ENCODE measurements at regions of chr17 and their contacts with region 1.

Region 1: GRCh38 chr17:42067351-42068091 is 17.1 kb upstream of the C17orf113 start:
- DNase-seq: peak; percentile 73
- CTCF ChIP-seq: peak; percentile 93

Region 2: GRCh38 chr17:42027961-42028790 is 39.3 kb before region 1 on chr17:
- CTCF ChIA-PET with region 1: interaction called, 44 read pairs
- POLR2A ChIA-PET with region 1: no interaction called
- DNase-seq: no peak
- CTCF ChIP-seq: no peak

Region 3: DNA sequence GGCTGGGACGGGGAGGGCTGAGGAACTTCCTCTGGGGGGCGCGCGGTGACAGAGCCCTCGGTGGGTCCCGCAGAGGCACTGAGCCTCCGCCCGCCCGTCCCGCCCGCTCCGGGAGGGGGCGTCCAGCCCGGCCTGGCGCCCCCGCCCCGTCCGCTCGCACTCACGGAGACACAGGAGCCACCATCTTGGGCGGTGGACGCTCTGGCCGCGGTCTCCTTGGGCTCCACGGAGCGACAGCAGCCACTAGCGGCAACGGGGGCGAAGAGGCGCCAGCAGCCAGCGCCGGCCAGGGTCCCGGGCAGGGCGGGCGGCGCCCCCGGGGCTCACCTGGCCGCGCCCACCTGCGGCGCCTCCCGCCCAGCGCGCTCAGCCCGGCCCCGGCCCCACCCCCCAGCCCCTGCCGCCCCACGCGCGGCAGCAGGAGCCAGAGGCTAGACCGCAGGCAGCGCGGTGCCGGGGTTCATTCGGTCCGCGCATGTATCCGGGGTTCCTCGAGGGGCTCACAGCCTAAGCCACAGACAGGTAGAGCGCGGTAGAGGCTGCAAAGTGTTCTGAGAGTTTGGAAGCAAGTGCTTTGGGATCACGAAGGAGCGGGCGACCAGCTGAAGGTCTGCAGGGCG is 17.0 kb before region 1 on chr17 and contains the start of gene C17orf113:
- CTCF ChIA-PET with region 1: interaction called, 32 read pairs
- POLR2A ChIA-PET with region 1: no interaction called
- DNase-seq: peak; percentile 85
- CTCF ChIP-seq: peak; percentile 58

Region 4: GRCh38 chr17:42090964-42091790 is 23.7 kb after region 1 on chr17:
- CTCF ChIA-PET with region 1: interaction called, 70 read pairs
- POLR2A ChIA-PET with region 1: no interaction called
- DNase-seq: no peak
- CTCF ChIP-seq: no peak

Region 5: GRCh38 chr17:42112552-42113176 is 45.1 kb after region 1 on chr17 and contains the start of gene DHX58:
- CTCF ChIA-PET with region 1: interaction called, 43 read pairs
- POLR2A ChIA-PET with region 1: no interaction called
- DNase-seq: peak; percentile 93
- CTCF ChIP-seq: no peak